CD4-positive, alpha-beta memory T cell (primary cell): ENCODE measurements at regions of chr16 and their contacts with region 1.

Region 1: DNA sequence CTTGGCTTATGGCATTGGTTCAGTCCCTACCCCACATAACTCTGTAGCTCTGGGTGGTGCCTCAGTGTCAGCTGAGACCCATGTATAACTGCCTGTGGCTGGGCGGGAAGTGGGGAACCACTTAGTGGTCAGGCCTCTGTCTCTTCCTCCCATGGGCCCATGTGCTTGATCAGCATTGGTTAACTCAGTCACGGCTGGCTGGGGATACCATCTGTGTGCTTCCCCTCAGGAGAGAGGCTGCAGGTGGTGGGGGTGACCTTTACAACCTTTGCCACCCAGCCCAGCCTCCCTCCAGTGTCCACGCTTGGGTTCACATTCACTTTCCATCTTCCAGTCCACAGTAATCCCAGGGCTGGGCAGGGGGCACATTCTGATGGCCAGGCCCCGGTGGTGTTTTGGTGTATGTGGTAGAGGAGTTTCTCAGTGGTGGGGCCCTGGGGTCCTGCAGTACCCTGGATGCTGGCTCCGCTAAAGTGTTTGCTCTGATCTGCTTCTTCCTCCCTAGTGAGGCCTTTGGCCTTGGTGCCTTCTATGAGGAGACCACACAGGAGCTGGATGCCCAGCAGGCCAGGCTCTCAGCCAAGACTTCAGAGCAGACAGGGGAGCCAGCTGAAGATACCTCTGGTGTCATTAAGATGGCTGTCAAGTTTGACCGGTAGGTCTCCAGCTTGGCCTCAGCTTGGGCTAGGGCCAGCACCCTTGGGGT is 10.2 kb upstream of the NFATC3 start:
- DNase-seq: peak; percentile 63 to 82 (median 71)
- H3K4me3 ChIP-seq: peak overlapping the region in 1 of 2 donors; percentile 1
- H3K4me3 Mint-ChIP-seq: peak overlapping the region; percentile 26 to 89 (median 84)
- H3K27ac ChIP-seq: peak overlapping the region; percentile 40
- H3K27ac Mint-ChIP-seq: peak overlapping the region; percentile 66 to 95 (median 91)
- H3K4me1 ChIP-seq: peaks cover 94% of the 10 kb centered on the region
- H3K4me1 Mint-ChIP-seq: peaks cover 70 to 92% (median 84%) of the 10 kb centered on the region in 4 donors
- H3K27me3 ChIP-seq: no peaks in the 10 kb centered on the region
- H3K27me3 Mint-ChIP-seq: no peaks in the 10 kb centered on the region

Region 2: GRCh38 chr16:68116256-68116867 is 41.4 kb after region 1 on chr16:
- CTCF ChIA-PET with region 1: interaction called, 11 read pairs
- POLR2A ChIA-PET with region 1: no interaction called
- intact Hi-C with region 1: no loop called
- DNase-seq: peak in 4 of 5 donors; percentile 30 to 41 (median 33)
- H3K4me3 ChIP-seq: no peak overlapping the region
- H3K4me3 Mint-ChIP-seq: peak overlapping the region in 4 of 8 donors; percentile 30 to 78 (median 50)
- H3K27ac ChIP-seq: no peak overlapping the region
- H3K27ac Mint-ChIP-seq: peak overlapping the region in 2 of 7 donors; percentile 62
- H3K4me1 ChIP-seq: peaks cover 95% of the 10 kb centered on the region
- H3K4me1 Mint-ChIP-seq: peaks cover 52 to 96% (median 79%) of the 10 kb centered on the region in 4 donors
- H3K27me3 ChIP-seq: no peaks in the 10 kb centered on the region
- H3K27me3 Mint-ChIP-seq: no peaks in the 10 kb centered on the region

Region 3: DNA sequence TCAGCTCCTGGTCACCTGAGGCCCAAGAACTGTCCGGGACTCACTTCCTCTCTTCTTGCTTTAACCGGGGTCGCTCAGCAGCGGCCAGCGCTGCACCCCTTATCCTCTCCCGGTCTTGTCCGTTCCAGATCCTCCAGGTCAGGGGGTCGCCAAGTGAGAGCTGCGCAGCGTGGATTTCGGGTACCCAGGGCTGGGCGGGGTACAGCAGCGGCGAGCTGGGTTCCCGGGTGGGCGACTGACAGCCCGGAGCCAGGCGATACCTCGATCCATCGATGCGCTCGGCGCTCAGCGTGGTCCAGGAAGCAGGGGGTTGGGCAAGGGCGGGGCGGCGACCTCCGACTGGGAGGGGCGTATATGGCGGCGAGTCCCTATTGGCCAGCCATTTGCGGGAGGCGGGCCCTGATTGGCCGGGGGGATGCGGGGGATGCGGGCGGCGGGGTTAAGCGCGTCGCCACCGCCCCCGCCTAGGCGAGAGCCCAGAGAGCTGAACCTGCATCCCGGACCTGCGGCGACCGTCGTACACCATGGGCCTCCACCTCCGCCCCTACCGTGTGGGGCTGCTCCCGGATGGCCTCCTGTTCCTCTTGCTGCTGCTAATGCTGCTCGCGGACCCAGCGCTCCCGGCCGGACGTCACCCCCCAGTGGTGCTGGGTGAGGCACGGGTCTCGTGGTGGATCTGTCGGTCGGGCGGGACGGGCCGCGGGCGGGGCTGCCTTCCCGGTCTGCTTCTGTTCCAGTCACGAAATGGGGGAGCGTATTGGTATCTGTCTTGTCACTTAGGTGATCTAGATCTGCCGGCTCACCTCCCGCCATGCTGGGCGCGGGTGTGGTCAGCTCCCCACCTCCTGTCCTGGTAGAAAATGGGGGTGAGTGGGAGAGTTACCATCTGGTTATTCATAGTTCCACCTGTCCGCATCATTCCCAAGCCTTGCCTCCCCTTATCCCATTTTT is 170.2 kb after region 1 on chr16 and contains the start of gene PLA2G15:
- CTCF ChIA-PET with region 1: no interaction called
- POLR2A ChIA-PET with region 1: no interaction called
- intact Hi-C with region 1: no loop called
- DNase-seq: peak; percentile 93 to 96 (median 94)
- H3K4me3 ChIP-seq: peak within 1 kb of the TSS; percentile 91 to 98
- H3K4me3 Mint-ChIP-seq: peak within 1 kb of the TSS; percentile 93 to 99 (median 98)
- H3K27ac ChIP-seq: peak within 1 kb of the TSS; percentile 58
- H3K27ac Mint-ChIP-seq: peak within 1 kb of the TSS; percentile 77 to 95 (median 93)
- H3K4me1 ChIP-seq: peaks cover 27% of the 10 kb centered on the region
- H3K4me1 Mint-ChIP-seq: peaks cover 15 to 31% (median 20%) of the 10 kb centered on the region in 4 donors
- H3K27me3 ChIP-seq: no peaks in the 10 kb centered on the region
- H3K27me3 Mint-ChIP-seq: no peaks in the 10 kb centered on the region
- total RNA-seq, gene PLA2G15: 12.0 to 13.3 TPM

Region 4: DNA sequence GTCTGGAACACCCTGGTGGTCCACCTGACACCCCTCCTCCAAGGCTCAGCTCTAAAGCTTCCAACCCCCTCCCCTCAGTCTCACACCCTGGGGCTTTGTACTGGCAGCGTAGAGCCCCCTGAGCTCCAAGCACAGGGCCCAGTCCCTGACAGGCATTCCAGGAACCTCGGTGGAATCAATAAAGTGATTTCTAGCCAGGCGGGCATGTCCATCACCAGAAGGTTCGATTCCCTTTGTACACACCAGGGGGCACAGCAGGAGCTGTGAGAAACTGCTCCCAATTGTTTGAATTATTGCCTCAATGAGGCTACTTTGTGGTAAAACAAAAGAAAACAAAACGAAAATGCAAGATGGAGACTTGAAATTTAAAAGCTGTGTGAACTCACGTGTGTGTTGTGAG is 321.5 kb after region 1 on chr16:
- CTCF ChIA-PET with region 1: no interaction called
- POLR2A ChIA-PET with region 1: no interaction called
- intact Hi-C with region 1: no loop called
- DNase-seq: peak; percentile 51 to 73 (median 68)
- H3K4me3 ChIP-seq: no peak overlapping the region
- H3K4me3 Mint-ChIP-seq: peak overlapping the region in 1 of 8 donors; percentile 34
- H3K27ac ChIP-seq: no peak overlapping the region
- H3K27ac Mint-ChIP-seq: peak overlapping the region in 5 of 7 donors; percentile 48 to 92 (median 64)
- H3K4me1 ChIP-seq: peaks cover 29% of the 10 kb centered on the region
- H3K4me1 Mint-ChIP-seq: peaks cover 10 to 37% (median 22%) of the 10 kb centered on the region in 4 donors
- H3K27me3 ChIP-seq: no peaks in the 10 kb centered on the region
- H3K27me3 Mint-ChIP-seq: peaks cover 0 to 1% of the 10 kb centered on the region in 2 donors